ENCODE measurements at regions of chr19 and their contacts with region 1.

Region 1: DNA sequence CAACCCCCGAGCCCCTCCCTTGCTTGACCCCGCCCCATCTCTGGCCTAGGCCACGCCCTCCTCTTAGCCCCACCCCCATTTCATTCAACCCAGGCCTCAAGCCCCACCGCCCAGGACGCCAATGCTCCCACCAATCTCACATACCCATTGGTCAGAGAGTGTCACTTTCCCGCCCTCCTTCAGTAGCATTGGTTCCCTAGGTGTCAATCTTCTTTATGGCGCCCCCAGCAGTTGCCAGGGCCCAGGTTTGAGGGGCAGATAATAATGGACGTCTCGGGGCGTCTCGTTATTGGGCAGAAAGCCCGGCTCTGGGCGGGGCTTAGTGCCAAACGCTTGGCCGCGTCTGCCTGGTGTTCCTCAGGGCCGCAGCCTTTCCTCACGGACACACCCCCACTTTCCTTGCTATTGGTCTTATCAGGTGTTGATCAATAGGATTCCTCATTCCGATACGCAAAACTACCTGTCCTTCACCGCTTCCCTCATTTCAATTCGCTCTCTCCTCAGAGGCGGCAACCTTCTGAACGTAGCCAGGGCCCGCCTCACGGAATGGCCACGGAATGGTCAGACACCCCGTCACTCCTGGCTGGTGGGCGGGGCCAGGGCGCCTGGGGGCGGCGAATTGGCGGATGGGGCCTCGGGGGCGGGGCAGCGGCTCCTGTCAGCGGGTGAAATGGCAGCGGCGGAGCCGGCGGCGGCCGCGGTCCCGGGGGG is at the start of gene EVI5L:
- DNase-seq: peak; percentile 99
- H3K4me3 Mint-ChIP-seq: peak within 1 kb of the TSS; percentile 86
- H3K27ac Mint-ChIP-seq: peak within 1 kb of the TSS; percentile 69
- H3K4me1 Mint-ChIP-seq: peaks cover 21% of the 10 kb centered on the region
- H3K27me3 Mint-ChIP-seq: peaks cover 15% of the 10 kb centered on the region
- total RNA-seq, gene EVI5L: 4.4 TPM in 2 replicates

Region 2: DNA sequence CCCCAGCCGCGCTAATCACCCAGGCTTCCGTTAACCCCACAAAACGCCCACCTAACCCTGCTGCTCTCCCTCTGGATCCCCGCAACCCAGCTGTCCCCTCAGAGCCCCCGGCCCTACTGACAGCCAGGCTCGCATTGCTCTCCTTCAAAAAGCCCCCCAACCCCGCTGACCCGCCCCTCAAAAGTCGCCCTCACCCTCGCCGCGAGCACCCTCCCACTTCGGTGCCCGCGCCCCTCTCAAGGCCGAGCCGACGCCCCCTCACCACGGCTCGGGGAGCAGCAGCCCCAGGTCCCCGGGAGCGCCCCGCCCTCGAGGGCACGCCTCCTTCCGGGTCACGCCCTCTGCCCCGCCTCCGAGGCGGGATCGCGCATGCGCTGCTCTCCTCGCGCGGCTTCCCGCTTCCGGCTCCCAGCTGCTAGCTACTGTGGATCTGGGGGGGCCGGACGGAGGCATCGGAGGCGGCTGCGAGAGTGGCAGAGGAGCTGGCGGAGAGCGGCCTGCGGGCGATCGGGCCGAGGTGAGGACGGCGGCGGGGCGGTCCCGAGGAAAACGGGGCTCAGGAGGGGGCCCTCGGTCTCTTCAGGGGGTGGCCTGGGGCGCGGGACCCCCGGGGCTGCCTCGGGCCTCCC is 434.9 kb before region 1 on chr19:
- intact Hi-C with region 1: loop called (anchors 1 kb)
- DNase-seq: peak; percentile 93
- H3K4me3 Mint-ChIP-seq: peak overlapping the region; percentile 89
- H3K27ac Mint-ChIP-seq: peak overlapping the region; percentile 61
- H3K4me1 Mint-ChIP-seq: peaks cover 26% of the 10 kb centered on the region
- H3K27me3 Mint-ChIP-seq: no peaks in the 10 kb centered on the region

Region 3: GRCh38 chr19:7806876-7807275 is 22.8 kb before region 1 on chr19:
- intact Hi-C with region 1: loop called (anchors 1 kb)
- DNase-seq: no peak
- H3K4me3 Mint-ChIP-seq: no peak overlapping the region
- H3K27ac Mint-ChIP-seq: no peak overlapping the region
- H3K4me1 Mint-ChIP-seq: peaks cover 9% of the 10 kb centered on the region
- H3K27me3 Mint-ChIP-seq: peaks cover 29% of the 10 kb centered on the region

Region 4: DNA sequence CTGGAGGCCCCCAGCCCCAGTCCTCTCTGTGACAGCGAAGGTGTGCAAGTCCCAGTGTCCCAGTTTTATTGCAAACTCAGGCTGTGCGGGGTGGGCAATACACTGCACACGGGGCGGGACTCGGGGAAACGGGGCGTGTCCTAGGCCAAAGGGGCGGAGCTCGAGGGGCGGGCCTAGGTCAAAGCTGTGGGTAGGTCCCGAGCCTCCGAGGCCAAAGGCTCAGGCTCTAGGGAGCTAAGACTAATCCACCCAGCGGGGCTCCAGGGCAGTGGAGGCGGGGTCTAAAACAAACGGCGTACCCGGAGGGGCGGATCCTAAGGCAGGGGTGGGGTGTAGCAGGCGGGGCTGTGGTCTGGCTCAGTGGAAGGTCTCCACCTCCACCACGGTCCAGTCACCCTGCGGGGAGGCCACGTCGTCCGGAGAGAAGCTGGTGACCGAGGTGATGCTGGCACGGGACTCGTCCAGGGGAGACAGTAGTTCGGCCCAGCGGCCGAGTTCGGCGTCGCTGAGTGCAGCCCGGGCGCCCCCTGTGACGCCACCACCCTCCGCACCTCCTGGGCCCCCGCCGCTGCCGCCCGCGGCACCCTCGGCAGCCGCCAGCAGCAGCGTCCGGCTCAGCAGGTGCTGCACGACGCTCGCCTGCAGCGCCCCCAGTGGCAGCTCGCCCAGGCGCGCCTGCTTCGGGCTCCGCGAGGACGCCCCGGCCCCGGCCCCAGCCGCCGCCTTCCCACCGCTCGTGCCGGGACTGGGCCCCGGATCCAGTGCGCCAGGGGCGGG is 39.1 kb after region 1 on chr19:
- intact Hi-C with region 1: loop called (anchors 1 kb)
- DNase-seq: peak; percentile 75
- H3K4me3 Mint-ChIP-seq: peak overlapping the region; percentile 61
- H3K27ac Mint-ChIP-seq: no peak overlapping the region
- H3K4me1 Mint-ChIP-seq: peaks cover 21% of the 10 kb centered on the region
- H3K27me3 Mint-ChIP-seq: peaks cover 44% of the 10 kb centered on the region

Region 5: DNA sequence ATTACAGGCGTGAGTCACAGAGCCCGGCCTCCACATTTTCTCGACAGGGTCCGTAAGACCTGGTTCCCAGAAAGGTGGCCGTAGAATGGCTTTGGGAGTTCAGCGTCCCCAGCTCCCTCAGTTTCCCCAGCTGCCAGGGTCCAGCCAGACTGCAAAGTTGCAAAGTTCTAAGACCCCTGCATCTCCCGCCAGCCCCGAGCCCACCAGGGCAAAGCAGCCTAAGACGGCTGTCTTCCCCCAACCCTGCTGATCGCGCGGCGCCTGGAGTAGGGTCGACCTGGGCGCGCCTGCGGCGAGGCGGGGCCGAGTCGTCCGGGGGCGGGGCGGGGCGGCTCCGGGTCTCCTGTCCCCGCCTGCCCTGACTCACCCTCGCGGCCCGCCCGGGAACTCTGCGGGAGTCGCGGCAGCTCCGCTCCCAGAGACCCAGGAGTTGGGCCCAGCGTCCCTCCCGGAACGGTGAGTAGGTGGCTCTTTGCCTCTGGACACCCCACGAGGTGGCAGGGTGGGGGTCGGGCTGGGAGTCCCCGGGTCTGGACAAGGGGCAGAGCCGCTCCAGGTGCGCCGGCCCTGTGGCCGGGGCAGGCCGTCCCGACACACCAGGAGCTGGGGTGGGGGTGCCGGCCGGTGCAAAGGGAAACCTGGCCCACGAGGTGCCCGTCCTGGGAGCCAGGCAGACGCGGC is 58.6 kb after region 1 on chr19 and contains the start of gene LRRC8E:
- intact Hi-C with region 1: no loop called
- DNase-seq: no peak
- H3K4me3 Mint-ChIP-seq: no peak within 1 kb of the TSS
- H3K27ac Mint-ChIP-seq: no peak within 1 kb of the TSS
- H3K4me1 Mint-ChIP-seq: no peaks in the 10 kb centered on the region
- H3K27me3 Mint-ChIP-seq: peaks cover 22% of the 10 kb centered on the region
- total RNA-seq, gene LRRC8E: not detected in 2 replicates

Region 6: DNA sequence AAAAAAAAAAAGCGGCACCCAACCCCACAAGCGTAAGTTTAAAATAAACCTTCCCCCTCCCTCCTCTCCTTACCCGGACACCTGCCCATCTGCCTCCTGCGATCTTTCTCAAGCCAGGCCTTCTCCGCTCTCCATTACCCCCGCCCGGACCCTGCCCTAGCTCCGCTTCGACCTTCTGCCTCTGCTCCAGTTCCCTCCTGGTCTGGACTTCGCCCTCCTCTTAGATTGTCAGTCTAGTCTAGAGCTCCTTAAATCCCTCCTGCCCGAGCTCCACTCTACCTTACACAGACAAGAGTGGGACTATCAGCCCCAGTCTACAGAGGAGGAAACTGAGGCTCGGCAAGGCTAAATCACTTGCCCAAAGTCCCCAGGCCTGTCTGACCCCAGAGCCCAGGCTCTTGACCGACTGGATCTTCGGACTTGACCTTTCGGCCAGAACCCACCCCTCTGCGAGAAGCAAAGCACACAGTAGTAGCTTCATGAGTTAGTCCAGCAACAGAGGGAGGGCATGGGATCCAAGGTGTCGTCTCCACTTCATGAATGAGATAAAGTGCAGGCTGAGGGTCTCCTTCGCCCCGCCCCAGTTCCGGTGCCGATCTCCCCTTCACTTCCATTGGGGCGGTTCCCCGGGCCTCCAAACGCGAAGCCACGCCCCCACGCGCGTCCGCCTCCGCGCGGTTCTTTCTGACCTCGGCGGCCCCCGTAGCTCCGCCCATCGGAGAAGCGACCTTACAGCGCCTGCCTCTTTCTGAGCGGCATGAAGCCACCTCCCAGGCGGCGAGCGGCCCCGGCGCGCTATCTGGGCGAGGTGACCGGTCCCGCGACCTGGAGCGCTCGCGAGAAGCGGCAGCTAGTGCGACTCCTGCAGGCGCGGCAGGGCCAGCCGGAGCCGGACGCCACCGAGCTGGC is 90.1 kb after region 1 on chr19 and contains the start of gene SNAPC2:
- intact Hi-C with region 1: loop called (anchors 1 kb)
- DNase-seq: peak; percentile 96
- H3K4me3 Mint-ChIP-seq: peak within 1 kb of the TSS; percentile 86
- H3K27ac Mint-ChIP-seq: peak within 1 kb of the TSS; percentile 93
- H3K4me1 Mint-ChIP-seq: peaks cover 22% of the 10 kb centered on the region
- H3K27me3 Mint-ChIP-seq: peaks cover 18% of the 10 kb centered on the region
- total RNA-seq, gene SNAPC2: 21.3 and 22.4 TPM in 2 replicates

Measured in activated T-helper 1 cell treated with anti-CD3 and anti-CD28 coated beads, Interleukin-12 subunit alpha, Interleukin-12 subunit beta, Interleukin-2, Interleukin-4 antibody, amounts not matched to agents 30 ng/mL and 10 ng/mL and 1 ng/mL, durations not matched to agents 14 hours and 24 hours and 36 hours (primary cell).